Endothelial cell of umbilical vein (primary cell): ENCODE measurements at regions of chr2 and their contacts with region 1.

Region 1: GRCh38 chr2:207230261-207231105 is 64.7 kb upstream of the KLF7 start:
- DNase-seq: peak; percentile 38
- H3K4me3 ChIP-seq: no peak overlapping the region
- H3K27ac ChIP-seq: no peak overlapping the region
- H3K4me1 ChIP-seq: peaks cover 30% of the 10 kb centered on the region
- H3K27me3 ChIP-seq: no peaks in the 10 kb centered on the region
- CTCF ChIP-seq: peak; percentile 32 to 37
- POLR2A ChIP-seq: no peak

Region 2: DNA sequence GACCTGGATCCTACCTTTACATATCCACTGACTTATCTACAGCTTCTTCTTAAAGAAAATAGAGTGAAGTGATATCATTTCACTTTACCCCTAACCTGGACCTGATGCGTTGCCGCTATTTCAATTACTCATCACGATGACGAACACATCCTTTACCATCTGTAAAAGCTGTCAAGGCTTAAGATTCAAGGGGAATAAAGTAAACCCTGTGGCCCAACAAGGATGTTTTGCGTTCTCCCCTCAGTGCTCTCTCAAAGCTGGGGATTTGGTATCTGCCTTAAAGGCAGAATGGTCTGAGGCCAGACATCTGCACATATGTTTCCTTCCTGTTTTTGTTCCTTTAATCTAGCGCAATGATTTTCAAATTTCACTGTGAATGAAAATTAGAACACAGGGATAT is 35.4 kb after region 1 on chr2:
- CTCF ChIA-PET with region 1: no interaction called
- POLR2A ChIA-PET with region 1: no interaction called
- dilution Hi-C with region 1: no loop called
- intact Hi-C with region 1: no loop called
- DNase-seq: no peak
- H3K4me3 ChIP-seq: no peak overlapping the region
- H3K27ac ChIP-seq: no peak overlapping the region
- H3K4me1 ChIP-seq: no peaks in the 10 kb centered on the region
- H3K27me3 ChIP-seq: no peaks in the 10 kb centered on the region
- CTCF ChIP-seq: no peak
- POLR2A ChIP-seq: no peak

Region 3: DNA sequence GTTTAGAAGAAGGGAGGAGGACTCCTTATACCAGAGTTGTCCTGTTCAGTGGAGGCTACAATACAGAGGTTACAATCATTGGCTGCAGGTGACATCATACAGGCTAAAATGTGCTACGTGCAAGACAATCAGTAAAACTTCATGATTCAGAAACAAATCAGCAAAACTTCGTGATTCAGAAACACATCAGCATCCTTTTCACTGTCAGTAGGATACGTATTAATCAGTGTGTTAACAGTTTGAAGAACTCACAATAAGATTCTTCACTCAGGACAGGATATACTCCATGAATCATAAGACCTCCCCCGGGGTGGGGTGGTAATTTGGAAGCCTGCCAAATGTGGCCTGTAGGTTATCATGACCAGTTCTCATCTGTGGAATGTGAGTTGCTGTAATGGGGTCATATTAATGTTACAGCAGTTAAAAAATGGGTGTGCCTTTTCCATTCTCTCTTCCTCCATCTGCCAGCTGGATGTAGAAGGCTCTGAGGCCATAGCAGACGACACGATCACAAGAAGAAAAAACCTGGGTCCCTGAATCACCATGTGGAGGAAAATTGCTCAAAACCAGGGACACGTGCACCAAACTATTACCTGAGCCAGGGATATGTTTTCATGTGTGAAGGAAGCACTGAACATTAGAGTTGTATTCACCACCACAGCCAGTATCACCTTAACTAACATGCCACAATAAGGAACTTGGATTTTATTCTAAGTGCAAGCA is 164.5 kb after region 1 on chr2:
- CTCF ChIA-PET with region 1: no interaction called
- POLR2A ChIA-PET with region 1: no interaction called
- dilution Hi-C with region 1: no loop called
- intact Hi-C with region 1: loop called (anchors 2 kb)
- DNase-seq: peak; percentile 98
- H3K4me3 ChIP-seq: no peak overlapping the region
- H3K27ac ChIP-seq: peak overlapping the region; percentile 99
- H3K4me1 ChIP-seq: peaks cover 21% of the 10 kb centered on the region
- H3K27me3 ChIP-seq: no peaks in the 10 kb centered on the region
- CTCF ChIP-seq: no peak
- POLR2A ChIP-seq: peak; percentile 44